ENCODE measurements at regions of chr12 and their contacts with region 1.

Region 1: DNA sequence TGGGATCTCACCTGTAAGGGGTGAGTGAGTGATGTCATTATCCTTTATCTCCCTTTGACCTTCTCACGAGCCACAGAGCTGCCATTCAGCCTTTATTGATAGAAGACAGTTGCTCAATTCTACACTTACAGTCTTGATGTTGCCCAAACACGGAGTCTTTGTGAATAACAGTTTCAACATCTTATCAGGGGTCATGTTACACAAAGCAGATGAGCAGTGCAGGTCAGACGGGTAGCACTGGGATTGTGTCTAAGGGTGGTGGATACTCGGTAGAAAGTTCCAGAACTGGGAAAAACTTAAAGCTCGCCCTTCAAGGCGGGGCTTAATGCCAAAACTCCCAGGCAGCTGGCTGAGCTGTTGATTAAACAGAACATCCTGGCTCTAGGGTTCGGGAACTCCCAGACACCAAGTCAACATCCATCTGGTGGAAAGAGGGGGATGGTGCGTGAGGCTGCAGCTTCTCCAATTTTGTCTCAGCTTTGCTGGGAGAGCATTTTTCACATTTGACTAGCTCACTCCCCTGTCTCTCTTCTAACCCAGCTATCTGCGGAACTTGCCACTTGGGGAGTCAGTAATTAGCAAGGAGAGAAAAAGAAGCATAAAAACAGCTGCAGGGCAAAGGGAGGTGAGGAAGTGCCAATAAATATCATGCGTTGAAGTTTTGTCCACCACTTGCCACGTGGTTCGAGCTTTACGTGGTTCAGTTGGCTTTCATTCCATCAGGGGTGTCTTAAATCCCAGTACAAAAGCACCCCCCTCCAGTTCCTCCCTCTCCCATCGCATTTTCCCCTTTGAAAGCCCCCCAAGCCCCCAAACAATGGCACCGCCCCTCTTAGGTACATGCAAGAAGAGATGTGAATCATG is 31.0 kb downstream of the FOXN4 start:
- DNase-seq: no peak
- H3K4me3 ChIP-seq: no peak overlapping the region
- H3K27ac ChIP-seq: no peak overlapping the region
- H3K4me1 ChIP-seq: no peaks in the 10 kb centered on the region
- H3K27me3 ChIP-seq: no peaks in the 10 kb centered on the region
- CTCF ChIP-seq: no peak

Region 2: DNA sequence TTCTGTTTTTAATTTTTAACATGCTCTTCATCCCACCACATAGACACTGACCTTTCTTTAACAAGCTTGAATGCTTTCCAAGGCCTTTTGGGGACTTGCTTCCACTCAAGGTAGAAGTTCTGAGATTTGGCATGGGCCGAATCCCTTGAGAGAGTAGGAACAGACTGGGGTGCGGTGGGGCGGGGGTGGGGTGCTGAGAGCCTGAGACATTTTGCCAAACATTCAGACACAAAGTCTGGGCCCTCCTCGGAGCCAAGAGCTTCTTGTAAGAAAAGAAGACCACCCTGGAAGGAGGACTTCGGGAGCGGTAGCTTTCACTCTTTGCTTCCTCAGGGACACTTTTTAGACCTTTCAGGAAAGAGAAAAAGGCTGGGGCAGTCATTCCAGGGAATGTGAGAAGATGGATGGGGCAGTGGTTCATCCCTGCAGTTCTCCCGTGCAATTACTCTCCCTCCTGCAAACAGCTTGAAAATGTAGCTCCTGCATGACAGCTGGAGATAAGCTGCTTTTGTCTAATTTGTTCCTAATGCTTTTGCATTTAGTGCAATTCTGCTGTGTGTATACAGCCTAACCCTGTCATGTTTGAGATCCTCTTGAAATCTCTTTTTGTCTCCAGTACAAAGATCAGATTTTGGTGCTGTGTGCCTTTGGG is 53.3 kb after region 1 on chr12:
- dilution Hi-C with region 1: loop called (anchors 5 kb)
- DNase-seq: no peak
- H3K4me3 ChIP-seq: no peak overlapping the region
- H3K27ac ChIP-seq: no peak overlapping the region
- H3K4me1 ChIP-seq: no peaks in the 10 kb centered on the region
- H3K27me3 ChIP-seq: no peaks in the 10 kb centered on the region
- CTCF ChIP-seq: no peak

Measured in keratinocyte (primary cell).